Activated B cell treated with CpG ODN at 0.5 μM for 24 hours (primary cell): ENCODE measurements at regions of chr22 and their contacts with region 1.

Region 1: GRCh38 chr22:36856121-36856791 is 4.5 kb upstream of the NCF4 start:
- DNase-seq: peak; percentile 96
- ATAC-seq: peak; percentile 39
- H3K4me3 Mint-ChIP-seq: peak overlapping the region; percentile 69
- H3K27ac Mint-ChIP-seq: peak overlapping the region; percentile 91
- H3K4me1 Mint-ChIP-seq: peaks cover 64% of the 10 kb centered on the region
- H3K27me3 Mint-ChIP-seq: no peaks in the 10 kb centered on the region
- CTCF ChIP-seq: peak; percentile 100

Region 2: GRCh38 chr22:36528795-36529751 is 327.2 kb before region 1 on chr22 and contains the start of gene EIF3D:
- CTCF ChIA-PET with region 1: no interaction called
- POLR2A ChIA-PET with region 1: interaction called, 4 read pairs
- intact Hi-C with region 1: loop called (anchors 5 kb)
- DNase-seq: peak; percentile 96
- ATAC-seq: peak; percentile 92
- H3K4me3 Mint-ChIP-seq: peak within 1 kb of the TSS; percentile 94
- H3K27ac Mint-ChIP-seq: peak within 1 kb of the TSS; percentile 97
- H3K4me1 Mint-ChIP-seq: peaks cover 25% of the 10 kb centered on the region
- H3K27me3 Mint-ChIP-seq: no peaks in the 10 kb centered on the region
- CTCF ChIP-seq: no peak
- total RNA-seq, gene EIF3D: 285 and 301 TPM in 2 replicates

Region 3: GRCh38 chr22:36781656-36782627 is 74.3 kb before region 1 on chr22:
- CTCF ChIA-PET with region 1: interaction called, 53 read pairs
- POLR2A ChIA-PET with region 1: interaction called, 24 read pairs
- intact Hi-C with region 1: loop called (anchors 1 kb)
- DNase-seq: peak; percentile 87
- ATAC-seq: peak; percentile 98
- H3K4me3 Mint-ChIP-seq: peak overlapping the region; percentile 41
- H3K27ac Mint-ChIP-seq: peak overlapping the region; percentile 77
- H3K4me1 Mint-ChIP-seq: peaks cover 14% of the 10 kb centered on the region
- H3K27me3 Mint-ChIP-seq: peaks cover 3% of the 10 kb centered on the region
- CTCF ChIP-seq: peak; percentile 97

Region 4: DNA sequence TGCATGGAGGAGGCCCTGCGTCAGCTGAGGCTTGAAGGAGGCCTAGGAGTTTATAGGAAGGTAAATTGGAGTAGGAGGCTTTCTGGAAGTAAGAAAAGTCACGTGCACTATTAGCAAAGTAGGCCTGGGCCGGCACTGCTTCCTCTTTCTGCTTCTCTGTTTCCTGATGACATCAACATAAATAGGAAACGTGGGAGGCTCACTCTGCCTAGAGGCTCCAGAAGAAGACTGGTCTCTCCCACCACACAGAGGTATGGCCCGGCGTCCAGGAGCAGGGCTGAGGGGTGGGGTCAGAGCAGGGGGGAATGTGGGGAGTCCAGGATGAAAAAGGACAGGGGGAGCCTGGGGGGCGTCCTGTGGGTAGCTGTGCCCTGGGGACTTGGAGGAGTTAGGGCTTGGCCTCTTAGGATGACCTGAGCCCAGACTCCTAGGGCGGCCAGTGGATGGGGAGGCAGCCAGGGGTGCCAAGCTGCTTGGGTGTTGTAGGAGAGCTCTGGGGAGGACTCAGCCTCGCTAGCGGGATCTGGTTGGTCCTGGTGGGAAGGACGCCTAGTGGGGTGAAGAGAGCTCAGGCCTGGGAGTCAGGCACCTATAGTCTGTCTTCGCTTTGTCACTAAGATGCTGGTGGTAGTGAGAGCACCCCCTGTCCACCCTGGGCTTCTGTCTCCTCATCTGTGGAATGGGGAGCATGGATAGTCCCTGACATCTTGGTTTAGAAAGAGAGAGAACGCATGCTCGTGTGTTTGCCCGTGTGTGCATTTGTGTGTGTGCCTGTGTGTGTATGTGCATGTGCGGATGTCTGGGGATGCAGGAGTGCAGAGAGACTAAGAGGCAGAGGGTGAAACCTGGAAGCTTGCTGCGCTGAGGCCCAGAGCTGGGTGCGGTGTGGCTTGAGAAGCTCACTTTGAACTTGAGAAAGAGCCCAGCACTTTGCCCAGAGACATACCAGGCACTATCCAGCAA is 57.5 kb after region 1 on chr22 and contains the start of gene CSF2RB:
- CTCF ChIA-PET with region 1: interaction called, 30 read pairs
- POLR2A ChIA-PET with region 1: interaction called, 42 read pairs
- intact Hi-C with region 1: loop called (anchors 1 kb)
- DNase-seq: peak; percentile 36
- ATAC-seq: peak; percentile 85
- H3K4me3 Mint-ChIP-seq: peak within 1 kb of the TSS; percentile 94
- H3K27ac Mint-ChIP-seq: peak within 1 kb of the TSS; percentile 95
- H3K4me1 Mint-ChIP-seq: peaks cover 50% of the 10 kb centered on the region
- H3K27me3 Mint-ChIP-seq: peaks cover 1% of the 10 kb centered on the region
- CTCF ChIP-seq: no peak
- total RNA-seq, gene CSF2RB: 141 and 152 TPM in 2 replicates

Region 5: GRCh38 chr22:36977947-36978660 is 121.8 kb after region 1 on chr22:
- CTCF ChIA-PET with region 1: interaction called, 120 read pairs
- POLR2A ChIA-PET with region 1: interaction called, 26 read pairs
- intact Hi-C with region 1: loop called (anchors 1 kb)
- DNase-seq: peak; percentile 80
- ATAC-seq: peak; percentile 85
- H3K4me3 Mint-ChIP-seq: peak overlapping the region; percentile 90
- H3K27ac Mint-ChIP-seq: peak overlapping the region; percentile 93
- H3K4me1 Mint-ChIP-seq: peaks cover 12% of the 10 kb centered on the region
- H3K27me3 Mint-ChIP-seq: peaks cover 11% of the 10 kb centered on the region
- CTCF ChIP-seq: peak; percentile 92

Region 6: DNA sequence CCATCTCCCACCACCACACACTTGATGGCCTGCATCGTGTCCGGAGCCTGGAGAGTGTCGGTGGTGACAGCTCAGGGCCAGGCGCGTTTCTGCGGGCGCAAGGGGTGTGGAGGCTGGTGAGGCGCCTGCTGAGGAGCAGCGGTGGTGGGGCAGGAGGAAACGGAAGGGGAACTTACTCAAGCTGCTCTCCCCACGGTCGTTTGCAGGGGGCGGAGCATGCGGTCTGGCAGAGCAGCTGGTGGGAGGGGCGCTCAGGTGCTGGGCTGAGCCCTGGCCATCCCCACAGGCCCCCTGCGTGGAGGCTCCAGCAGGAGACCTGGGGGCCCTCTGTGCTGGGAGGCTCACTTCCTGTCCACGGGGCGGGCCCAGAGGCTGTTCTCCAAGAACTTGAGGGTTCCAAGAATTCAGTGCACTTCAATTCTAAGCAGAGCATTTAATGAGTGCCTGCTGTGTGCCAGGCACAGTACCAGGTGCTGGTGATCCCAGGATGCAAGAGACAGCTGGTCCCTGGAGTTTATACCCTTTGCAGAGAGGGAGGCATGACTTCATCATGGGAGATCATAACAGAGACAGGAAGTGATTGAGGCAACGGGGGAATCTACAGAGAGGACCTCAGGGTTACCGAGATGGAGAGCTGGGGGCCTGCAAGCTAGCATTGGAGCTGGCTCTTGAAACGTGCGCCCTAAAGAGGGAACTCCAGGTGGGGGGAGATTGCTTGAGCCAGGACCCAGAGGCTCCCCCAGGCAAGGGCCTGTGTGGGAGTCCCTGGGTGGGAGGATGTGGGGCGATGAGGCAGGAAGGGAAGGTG is 388.1 kb after region 1 on chr22 and contains the start of gene RAC2:
- CTCF ChIA-PET with region 1: no interaction called
- POLR2A ChIA-PET with region 1: interaction called, 22 read pairs
- intact Hi-C with region 1: loop called (anchors 2 kb)
- DNase-seq: peak; percentile 77
- ATAC-seq: peak; percentile 59
- H3K4me3 Mint-ChIP-seq: peak within 1 kb of the TSS; percentile 97
- H3K27ac Mint-ChIP-seq: peak within 1 kb of the TSS; percentile 90
- H3K4me1 Mint-ChIP-seq: peaks cover 74% of the 10 kb centered on the region
- H3K27me3 Mint-ChIP-seq: no peaks in the 10 kb centered on the region
- CTCF ChIP-seq: no peak
- total RNA-seq, gene RAC2: 518 and 557 TPM in 2 replicates